AG04449 (cell line): ENCODE measurements at regions of chr9 and their contacts with region 1.

Region 1: GRCh38 chr9:121376214-121376830 is 6.3 kb upstream of the STOM start:
- DNase-seq: no peak
- H3K4me3 ChIP-seq: no peak overlapping the region
- CTCF ChIP-seq: no peak

Region 2: GRCh38 chr9:120951960-120952618 is 424.2 kb before region 1 on chr9:
- CTCF ChIA-PET with region 1: no interaction called
- POLR2A ChIA-PET with region 1: no interaction called
- DNase-seq: no peak
- H3K4me3 ChIP-seq: no peak overlapping the region
- CTCF ChIP-seq: no peak

Region 3: DNA sequence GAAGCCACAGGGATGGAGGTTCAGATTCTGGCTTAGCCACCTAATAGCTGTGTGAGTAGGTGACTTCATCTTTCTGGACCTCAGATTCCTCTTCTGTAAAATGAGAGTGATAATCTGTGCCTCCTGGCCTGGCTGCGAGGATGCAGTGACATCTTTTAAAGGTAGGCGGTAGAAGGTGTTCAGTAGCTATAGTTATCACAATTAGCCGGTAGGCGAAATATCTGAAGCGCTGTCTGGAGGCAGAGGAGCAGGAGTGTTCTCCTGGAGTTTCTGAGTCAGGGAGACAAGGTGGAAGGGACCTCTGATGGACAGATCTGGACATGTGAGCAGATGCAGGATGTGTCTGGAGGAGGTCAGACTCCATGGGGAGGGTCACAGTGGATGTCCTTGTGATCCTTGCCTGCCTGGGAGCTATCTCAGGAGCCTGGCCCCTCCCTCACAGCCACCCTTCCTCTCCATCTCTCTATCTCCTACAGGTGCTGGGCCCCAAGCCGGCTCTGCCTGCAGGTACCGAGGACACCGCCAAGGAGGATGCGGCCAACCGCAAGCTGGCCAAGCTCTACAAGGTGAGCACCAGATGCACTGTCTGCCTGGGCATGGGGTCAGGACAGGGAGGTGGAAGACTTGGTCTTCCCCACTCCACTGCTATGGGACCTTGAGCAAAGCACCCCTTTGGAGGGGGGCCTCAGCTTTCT is 62.7 kb before region 1 on chr9:
- CTCF ChIA-PET with region 1: interaction called, 297 read pairs
- POLR2A ChIA-PET with region 1: no interaction called
- DNase-seq: no peak
- H3K4me3 ChIP-seq: no peak overlapping the region
- CTCF ChIP-seq: no peak

Region 4: GRCh38 chr9:121331992-121332685 is 44.2 kb before region 1 on chr9:
- CTCF ChIA-PET with region 1: interaction called, 10 read pairs
- POLR2A ChIA-PET with region 1: no interaction called
- DNase-seq: no peak
- H3K4me3 ChIP-seq: no peak overlapping the region
- CTCF ChIP-seq: peak; percentile 23

Region 5: GRCh38 chr9:121350993-121351561 is 25.2 kb before region 1 on chr9:
- CTCF ChIA-PET with region 1: interaction called, 12 read pairs
- POLR2A ChIA-PET with region 1: no interaction called
- DNase-seq: no peak
- H3K4me3 ChIP-seq: no peak overlapping the region
- CTCF ChIP-seq: no peak

Region 6: GRCh38 chr9:121393318-121393717 is 17.0 kb after region 1 on chr9:
- CTCF ChIA-PET with region 1: interaction called, 105 read pairs
- POLR2A ChIA-PET with region 1: no interaction called
- DNase-seq: no peak
- H3K4me3 ChIP-seq: no peak overlapping the region
- CTCF ChIP-seq: no peak

Region 7: DNA sequence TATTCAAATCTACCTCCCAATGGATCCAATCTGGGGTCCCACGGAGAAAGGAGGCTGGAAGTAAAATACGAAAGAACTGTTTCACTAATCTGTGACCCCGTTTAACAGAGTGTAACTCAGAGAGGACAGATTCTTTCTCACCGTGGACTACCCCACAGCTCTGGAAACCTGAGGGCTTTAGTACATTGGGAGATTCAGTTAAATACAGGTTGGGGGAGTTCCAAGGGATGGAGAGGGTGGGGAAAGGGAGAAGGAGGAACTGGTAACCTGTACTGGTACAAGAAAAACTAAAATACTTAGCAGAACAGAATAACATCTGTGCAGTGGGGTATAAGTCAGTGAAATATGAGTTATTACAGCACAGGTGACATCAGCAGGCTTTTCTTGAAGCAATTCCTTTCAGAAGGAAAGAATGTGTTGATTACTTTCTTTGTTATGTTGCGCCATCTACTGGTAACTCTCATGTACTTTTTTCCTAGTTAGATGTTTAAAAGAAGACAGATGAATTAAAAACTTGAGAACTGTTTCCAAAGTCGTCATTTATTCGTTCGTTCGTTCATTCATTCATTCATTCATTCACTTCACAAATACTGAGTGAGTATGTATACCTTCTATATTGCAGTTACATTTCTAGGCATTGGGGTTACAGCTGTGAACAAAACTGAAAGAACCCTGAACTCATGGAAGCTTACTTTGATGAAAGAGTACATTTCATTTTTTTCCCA is 23.7 kb after region 1 on chr9:
- CTCF ChIA-PET with region 1: interaction called, 105 read pairs
- POLR2A ChIA-PET with region 1: no interaction called
- DNase-seq: peak; percentile 37
- H3K4me3 ChIP-seq: no peak overlapping the region
- CTCF ChIP-seq: peak; percentile 28